ENCODE measurements at regions of chr9 and their contacts with region 1.

Region 1: DNA sequence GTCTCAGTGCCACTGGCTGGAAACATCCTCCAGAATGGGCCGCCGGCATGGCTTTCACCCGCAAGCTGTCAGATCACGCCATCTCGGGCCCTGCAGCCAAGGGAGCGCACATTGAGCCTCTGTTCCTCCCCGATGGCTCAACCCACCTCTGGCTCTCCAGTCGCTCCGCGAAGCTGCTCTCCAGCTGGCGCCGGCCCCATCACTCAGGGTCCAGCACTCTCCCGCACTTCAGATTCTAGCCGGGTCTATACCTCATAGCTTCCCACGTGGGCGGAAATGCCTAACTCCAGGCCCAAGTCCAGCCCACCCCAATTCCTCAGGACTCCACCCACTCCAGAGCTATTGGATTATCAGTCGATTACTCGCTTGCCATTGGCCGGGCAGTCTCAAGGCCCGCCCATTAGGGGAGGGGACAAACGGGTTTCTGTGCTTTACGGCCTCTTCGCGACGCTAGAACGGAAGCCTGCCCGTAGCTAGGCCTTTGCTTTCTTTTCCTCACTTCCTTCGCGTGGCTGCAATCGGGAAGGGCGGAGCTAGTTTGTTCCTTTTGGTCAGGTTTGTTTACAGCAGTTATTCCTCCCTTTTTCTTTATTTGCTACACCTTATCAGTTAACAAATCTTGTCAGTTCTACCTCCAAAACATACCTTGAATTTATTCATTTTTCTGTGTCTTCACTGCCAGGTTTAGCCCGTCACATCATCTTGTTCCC is at the start of gene NOL6:
- DNase-seq: peak; percentile 85 to 99 (median 98)
- ATAC-seq: peak; percentile 99
- H3K4me3 Mint-ChIP-seq: peak within 1 kb of the TSS; percentile 90 to 100 (median 98)
- H3K27ac Mint-ChIP-seq: peak within 1 kb of the TSS; percentile 91 to 98 (median 97)
- H3K4me1 Mint-ChIP-seq: peaks cover 10 to 35% (median 28%) of the 10 kb centered on the region in 4 donors
- H3K27me3 Mint-ChIP-seq: no peaks in the 10 kb centered on the region
- polyA plus RNA-seq, gene NOL6: 13.5 to 29.2 (median 19.3) TPM

Region 2: DNA sequence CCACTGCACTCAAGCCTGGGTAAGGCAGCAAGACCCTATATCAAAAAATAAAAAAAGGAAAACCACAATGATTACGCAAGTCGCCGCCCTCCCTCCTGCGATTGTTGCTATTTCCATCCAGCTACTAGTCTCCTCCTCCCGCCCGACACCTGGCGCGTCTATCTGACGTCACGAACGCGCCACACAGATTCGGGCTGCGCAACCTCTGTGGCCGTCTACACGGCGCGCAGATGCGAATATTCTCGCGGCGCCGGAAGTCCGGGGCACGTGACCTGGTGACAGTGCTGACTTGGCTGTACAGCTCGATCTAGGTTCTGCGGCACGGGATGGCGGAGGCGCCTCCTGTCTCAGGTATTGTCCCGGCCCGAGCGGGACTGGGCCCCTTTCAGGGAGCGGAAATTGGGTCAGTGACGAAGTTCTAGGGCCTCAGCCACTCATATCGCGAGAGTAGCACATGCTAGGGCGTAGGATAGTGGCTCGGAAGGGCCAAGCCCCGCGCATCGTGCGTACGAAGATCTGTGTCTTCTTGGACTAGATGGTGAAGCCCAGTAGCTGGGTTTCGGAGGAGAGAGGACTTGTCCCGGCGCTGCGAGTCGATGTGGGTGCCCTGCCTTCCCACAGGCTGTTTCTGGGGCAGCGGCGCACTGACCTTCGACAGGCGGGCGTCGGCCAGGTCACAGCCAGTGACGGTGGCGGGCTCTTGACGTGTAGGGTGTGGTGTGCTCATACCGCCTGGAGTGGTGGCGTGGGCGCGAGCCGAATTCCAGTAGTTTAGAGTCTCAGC is 183.4 kb before region 1 on chr9 and contains the start of gene NFX1:
- POLR2A ChIA-PET with region 1: interaction called, 23 read pairs
- DNase-seq: peak; percentile 93 to 100 (median 99)
- ATAC-seq: peak; percentile 84 to 85
- H3K4me3 Mint-ChIP-seq: peak within 1 kb of the TSS; percentile 82 to 99 (median 95)
- H3K27ac Mint-ChIP-seq: peak within 1 kb of the TSS; percentile 97 to 100 (median 99)
- H3K4me1 Mint-ChIP-seq: peaks cover 27 to 72% (median 63%) of the 10 kb centered on the region in 4 donors
- H3K27me3 Mint-ChIP-seq: peaks cover 0 to 2% (median 0%) of the 10 kb centered on the region in 5 donors
- polyA plus RNA-seq, gene NFX1: 22.8 to 42.7 (median 31.6) TPM

Region 3: GRCh38 chr9:33446946-33447798 is 26.6 kb before region 1 on chr9 and contains the start of gene AQP3:
- POLR2A ChIA-PET with region 1: interaction called, 55 read pairs
- DNase-seq: peak; percentile 56 to 85 (median 68)
- ATAC-seq: peak; percentile 50 to 70
- H3K4me3 Mint-ChIP-seq: peak within 1 kb of the TSS; percentile 90 to 99 (median 95)
- H3K27ac Mint-ChIP-seq: peak within 1 kb of the TSS; percentile 92 to 98 (median 96)
- H3K4me1 Mint-ChIP-seq: peaks cover 25 to 72% (median 52%) of the 10 kb centered on the region in 4 donors
- H3K27me3 Mint-ChIP-seq: no peaks in the 10 kb centered on the region
- polyA plus RNA-seq, gene AQP3: 124 to 166 (median 145) TPM

Region 4: GRCh38 chr9:33452828-33453271 is 20.9 kb before region 1 on chr9:
- POLR2A ChIA-PET with region 1: interaction called, 55 read pairs
- DNase-seq: peak in 8 of 10 donors; percentile 20 to 40 (median 33)
- ATAC-seq: peak; percentile 58 to 71
- H3K4me3 Mint-ChIP-seq: peak overlapping the region in 6 of 10 donors; percentile 23 to 71 (median 50)
- H3K27ac Mint-ChIP-seq: peak overlapping the region; percentile 84 to 95 (median 90)
- H3K4me1 Mint-ChIP-seq: peaks cover 36 to 75% (median 65%) of the 10 kb centered on the region in 4 donors
- H3K27me3 Mint-ChIP-seq: no peaks in the 10 kb centered on the region

Region 5: DNA sequence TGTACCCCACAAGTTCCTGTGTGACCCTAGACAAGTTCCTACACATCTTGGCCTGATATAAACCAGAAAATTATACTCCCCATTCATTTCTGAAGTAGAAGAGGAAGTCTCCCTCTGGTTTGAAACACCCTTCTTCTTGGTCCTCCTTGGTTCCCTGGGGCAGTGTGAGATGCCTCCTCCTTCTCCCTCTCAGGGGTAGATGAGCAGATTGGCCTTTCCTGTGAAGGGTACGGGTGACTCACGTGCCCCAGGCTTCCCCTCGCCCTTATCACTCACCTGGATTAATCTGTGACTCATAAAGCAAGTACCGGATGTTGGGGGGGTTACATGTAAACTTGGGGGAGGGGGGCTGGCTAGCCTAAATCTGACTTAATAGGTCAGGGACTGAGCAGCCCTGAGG is 15.4 kb before region 1 on chr9:
- POLR2A ChIA-PET with region 1: interaction called, 47 read pairs
- DNase-seq: peak in 9 of 10 donors; percentile 17 to 79 (median 41)
- ATAC-seq: peak; percentile 78 to 88
- H3K4me3 Mint-ChIP-seq: peak overlapping the region; percentile 53 to 86 (median 76)
- H3K27ac Mint-ChIP-seq: peak overlapping the region; percentile 87 to 98 (median 94)
- H3K4me1 Mint-ChIP-seq: peaks cover 29 to 74% (median 56%) of the 10 kb centered on the region in 4 donors
- H3K27me3 Mint-ChIP-seq: no peaks in the 10 kb centered on the region

Measured in naive thymus-derived CD8-positive, alpha-beta T cell (primary cell).